ENCODE measurements at regions of chr6 and their contacts with region 1.

Region 1: DNA sequence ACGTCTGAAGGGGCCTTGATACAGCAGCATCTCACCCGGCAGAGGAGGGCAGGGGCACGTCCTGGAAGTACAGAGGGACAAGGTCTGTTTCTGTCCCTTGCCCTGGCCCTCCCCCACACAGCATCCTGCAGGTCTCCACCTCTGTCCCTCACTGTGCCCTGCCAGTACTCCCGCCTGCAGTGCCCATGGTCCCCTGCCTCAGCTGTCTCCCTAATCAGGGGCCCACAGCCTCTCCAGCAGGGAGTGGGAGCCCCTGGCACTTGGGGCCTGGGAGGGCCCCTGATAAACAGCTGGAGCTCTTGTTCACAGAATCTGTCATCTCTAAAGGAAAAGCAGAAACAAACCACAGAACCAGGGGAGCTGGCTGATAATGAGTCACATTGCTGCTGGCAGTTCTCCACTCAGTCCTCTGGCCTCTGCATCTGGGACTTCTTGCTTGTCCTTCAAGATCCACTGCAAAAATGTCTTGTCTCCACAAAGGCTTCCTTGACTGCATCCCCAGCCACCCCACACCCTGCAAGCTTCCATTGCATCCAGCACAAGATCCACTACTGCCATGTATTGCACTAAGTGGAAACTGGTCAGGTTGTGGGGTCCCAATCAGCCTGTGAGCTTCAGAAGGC is 33.2 kb upstream of the TAF8 start:
- DNase-seq: peak; percentile 62
- ATAC-seq: peak; percentile 73
- H3K4me3 Mint-ChIP-seq: peak overlapping the region; percentile 50
- H3K27ac Mint-ChIP-seq: peak overlapping the region; percentile 93
- H3K4me1 Mint-ChIP-seq: peaks cover 78% of the 10 kb centered on the region
- H3K27me3 Mint-ChIP-seq: no peaks in the 10 kb centered on the region

Region 2: DNA sequence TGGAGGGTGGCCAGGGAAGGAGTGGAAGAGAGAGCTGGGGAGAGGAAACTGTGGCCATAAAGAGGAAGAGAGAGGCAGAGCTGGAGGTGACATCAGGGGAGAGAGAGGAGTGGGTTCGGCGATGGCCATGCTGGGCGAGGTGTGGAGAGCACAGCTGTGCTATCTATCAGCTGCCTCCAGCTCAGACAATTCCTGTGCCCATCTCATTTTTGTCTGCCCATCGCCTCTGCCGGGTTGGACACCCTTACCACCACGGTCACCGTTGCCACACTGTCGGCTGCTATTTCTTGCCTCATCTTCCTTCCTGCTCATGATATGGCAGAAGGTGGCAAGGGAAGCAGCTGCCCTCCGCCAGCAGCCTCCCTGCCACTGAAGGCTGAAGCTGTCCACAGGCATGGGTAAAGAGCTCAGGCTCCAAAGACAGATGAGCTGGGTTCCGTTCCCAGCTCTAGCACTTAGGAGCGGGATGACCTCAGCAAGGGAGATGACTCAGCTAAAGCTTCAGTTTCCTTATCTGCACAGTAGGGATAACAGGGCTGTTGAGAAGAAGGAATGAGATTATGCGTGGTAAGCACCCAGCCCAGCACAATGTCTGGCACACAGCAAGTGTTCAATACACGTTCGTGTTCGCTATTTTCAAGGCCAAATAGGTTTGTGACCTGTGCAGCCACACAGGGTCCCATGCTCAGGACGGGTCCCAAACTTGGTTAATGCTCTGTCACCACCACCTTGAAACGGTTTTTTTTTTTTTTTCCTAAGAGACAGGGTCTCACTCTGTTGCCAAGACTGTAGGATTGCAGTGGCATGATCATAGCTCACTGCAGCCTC is 11.3 kb after region 1 on chr6:
- CTCF ChIA-PET with region 1: interaction called, 12 read pairs
- POLR2A ChIA-PET with region 1: interaction called, 18 read pairs
- DNase-seq: no peak
- ATAC-seq: peak; percentile 29
- H3K4me3 Mint-ChIP-seq: peak overlapping the region; percentile 63
- H3K27ac Mint-ChIP-seq: peak overlapping the region; percentile 97
- H3K4me1 Mint-ChIP-seq: peaks cover 90% of the 10 kb centered on the region
- H3K27me3 Mint-ChIP-seq: no peaks in the 10 kb centered on the region

Region 3: GRCh38 chr6:42038811-42039408 is 21.8 kb after region 1 on chr6:
- CTCF ChIA-PET with region 1: interaction called, 49 read pairs
- POLR2A ChIA-PET with region 1: interaction called, 31 read pairs
- DNase-seq: no peak
- ATAC-seq: no peak
- H3K4me3 Mint-ChIP-seq: peak overlapping the region; percentile 75
- H3K27ac Mint-ChIP-seq: peak overlapping the region; percentile 92
- H3K4me1 Mint-ChIP-seq: peaks cover 80% of the 10 kb centered on the region
- H3K27me3 Mint-ChIP-seq: no peaks in the 10 kb centered on the region

Region 4: GRCh38 chr6:42453654-42454427 is 436.7 kb after region 1 on chr6:
- CTCF ChIA-PET with region 1: no interaction called
- POLR2A ChIA-PET with region 1: no interaction called
- DNase-seq: peak; percentile 29
- ATAC-seq: no peak
- H3K4me3 Mint-ChIP-seq: peak overlapping the region; percentile 91
- H3K27ac Mint-ChIP-seq: peak overlapping the region; percentile 30
- H3K4me1 Mint-ChIP-seq: peaks cover 31% of the 10 kb centered on the region
- H3K27me3 Mint-ChIP-seq: peaks cover 14% of the 10 kb centered on the region

Measured in activated CD8-positive, alpha-beta T cell treated with anti-CD3 and anti-CD28 coated beads, Interleukin-2, amount 10 ng/mL, durations not matched to agents 7 days and 5 days (primary cell).